ENCODE measurements at regions of chr14 and their contacts with region 1.

Region 1: DNA sequence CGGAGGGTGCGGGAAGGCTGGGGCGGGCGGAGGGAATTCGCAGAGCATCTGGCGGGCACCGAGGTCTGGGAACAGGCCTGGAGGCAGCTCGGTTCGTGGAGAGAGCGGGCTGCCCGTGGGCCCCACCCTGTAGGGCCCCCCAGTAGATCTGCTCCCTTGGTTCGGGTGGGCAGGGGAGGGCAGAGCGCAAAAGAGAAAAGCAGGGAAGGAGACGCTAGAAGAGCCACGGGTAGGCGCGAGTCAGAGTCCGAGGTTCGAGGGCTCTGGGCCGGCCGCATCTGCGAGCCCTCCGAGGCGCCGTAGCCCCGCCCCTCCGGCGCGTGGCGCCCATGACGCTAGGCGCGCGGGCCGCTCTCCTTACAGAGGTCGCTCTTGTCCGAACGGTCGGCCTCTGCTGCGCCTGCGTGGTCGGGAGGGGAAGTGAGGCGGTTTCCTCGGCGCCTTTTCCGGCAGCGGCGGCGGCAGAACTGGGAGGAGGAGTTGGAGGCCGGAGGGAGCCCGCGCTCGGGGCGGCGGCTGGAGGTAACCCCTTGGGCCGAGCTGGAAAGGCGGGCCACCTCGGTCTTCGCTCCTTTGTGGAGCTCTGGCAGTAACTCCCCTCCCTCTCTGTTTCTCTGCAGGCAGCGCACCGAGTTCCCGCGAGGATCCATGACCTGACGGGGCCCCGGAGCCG is at the start of gene ARF6:
- DNase-seq: peak; percentile 85 to 98 (median 89)
- ATAC-seq: peak; percentile 93
- H3K4me3 ChIP-seq: peak within 1 kb of the TSS; percentile 68
- H3K4me3 Mint-ChIP-seq: peak within 1 kb of the TSS; percentile 95 to 100 (median 98)
- H3K27ac ChIP-seq: peak within 1 kb of the TSS; percentile 97
- H3K27ac Mint-ChIP-seq: peak within 1 kb of the TSS; percentile 98 to 100 (median 99)
- H3K4me1 ChIP-seq: peaks cover 10 to 18% of the 10 kb centered on the region in 2 donors
- H3K4me1 Mint-ChIP-seq: peaks cover 21 to 42% (median 40%) of the 10 kb centered on the region in 7 donors
- H3K27me3 ChIP-seq: no peaks in the 10 kb centered on the region
- H3K27me3 Mint-ChIP-seq: no peaks in the 10 kb centered on the region
- total RNA-seq, gene ARF6: 61.9 to 173 (median 77.6) TPM

Region 2: GRCh38 chr14:49879683-49880204 is 13.0 kb before region 1 on chr14:
- CTCF ChIA-PET with region 1: interaction called, 12 read pairs
- POLR2A ChIA-PET with region 1: interaction called, 9 read pairs
- intact Hi-C with region 1: loop called (anchors 1 kb)
- DNase-seq: peak in 8 of 9 donors; percentile 32 to 64 (median 48)
- ATAC-seq: peak; percentile 92
- H3K4me3 ChIP-seq: no peak overlapping the region
- H3K4me3 Mint-ChIP-seq: no peak overlapping the region
- H3K27ac ChIP-seq: no peak overlapping the region
- H3K27ac Mint-ChIP-seq: peak overlapping the region in 6 of 9 donors; percentile 17 to 74 (median 44)
- H3K4me1 ChIP-seq: peaks cover 0 to 6% of the 10 kb centered on the region in 2 donors
- H3K4me1 Mint-ChIP-seq: peaks cover 10 to 30% (median 12%) of the 10 kb centered on the region in 7 donors
- H3K27me3 ChIP-seq: no peaks in the 10 kb centered on the region
- H3K27me3 Mint-ChIP-seq: peaks cover 0 to 3% (median 0%) of the 10 kb centered on the region in 5 donors

Region 3: GRCh38 chr14:49946320-49947141 is 53.8 kb after region 1 on chr14:
- CTCF ChIA-PET with region 1: no interaction called
- POLR2A ChIA-PET with region 1: interaction called, 18 read pairs
- intact Hi-C with region 1: loop called (anchors 2 kb)
- DNase-seq: peak in 7 of 9 donors; percentile 30 to 55 (median 43)
- ATAC-seq: peak; percentile 71
- H3K4me3 ChIP-seq: peak overlapping the region; percentile 36
- H3K4me3 Mint-ChIP-seq: peak overlapping the region; percentile 43 to 81 (median 74)
- H3K27ac ChIP-seq: peak overlapping the region; percentile 66
- H3K27ac Mint-ChIP-seq: peak overlapping the region; percentile 82 to 98 (median 94)
- H3K4me1 ChIP-seq: peaks cover 28 to 46% of the 10 kb centered on the region in 2 donors
- H3K4me1 Mint-ChIP-seq: peaks cover 26 to 86% (median 77%) of the 10 kb centered on the region in 7 donors
- H3K27me3 ChIP-seq: no peaks in the 10 kb centered on the region
- H3K27me3 Mint-ChIP-seq: no peaks in the 10 kb centered on the region

Region 4: DNA sequence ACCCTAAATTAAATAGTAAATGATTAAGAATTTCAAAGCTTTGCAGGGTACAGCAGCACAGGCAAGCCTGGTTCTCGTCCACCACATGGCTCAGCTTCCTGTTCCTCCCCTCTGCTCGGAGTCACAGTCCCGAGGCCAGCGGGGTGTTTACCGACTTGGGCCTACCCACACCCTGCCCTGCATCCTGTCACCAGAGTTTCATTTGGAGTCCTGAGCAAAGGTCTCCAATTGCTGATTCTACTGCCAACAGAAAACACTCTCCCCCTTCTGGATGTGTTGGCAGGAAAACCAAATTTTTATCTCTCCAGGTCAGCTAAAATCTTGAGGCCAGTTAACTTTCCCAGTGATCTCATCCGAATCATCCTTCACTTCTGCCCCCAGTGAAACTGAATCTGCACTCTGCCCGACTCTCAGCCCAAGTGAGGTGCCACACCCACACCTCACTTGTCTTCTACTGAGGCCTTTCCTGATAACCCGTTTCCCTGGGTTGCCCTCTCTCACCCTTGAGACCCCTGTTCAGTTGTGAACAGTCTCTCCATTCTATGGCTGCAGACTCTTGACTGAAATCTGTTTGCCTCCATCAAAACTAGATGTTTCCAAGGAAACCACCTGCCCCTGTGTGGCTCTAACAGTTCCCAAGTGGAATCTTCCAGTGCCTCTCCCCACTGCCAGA is 152.4 kb after region 1 on chr14:
- CTCF ChIA-PET with region 1: interaction called, 3 read pairs
- POLR2A ChIA-PET with region 1: interaction called, 15 read pairs
- intact Hi-C with region 1: loop called (anchors 1 kb)
- DNase-seq: peak in 8 of 9 donors; percentile 39 to 74 (median 62)
- ATAC-seq: peak; percentile 86
- H3K4me3 ChIP-seq: no peak overlapping the region
- H3K4me3 Mint-ChIP-seq: peak overlapping the region; percentile 50 to 89 (median 74)
- H3K27ac ChIP-seq: peak overlapping the region; percentile 69
- H3K27ac Mint-ChIP-seq: peak overlapping the region; percentile 88 to 99 (median 96)
- H3K4me1 ChIP-seq: peaks cover 51 to 63% of the 10 kb centered on the region in 2 donors
- H3K4me1 Mint-ChIP-seq: peaks cover 49 to 83% (median 71%) of the 10 kb centered on the region in 7 donors
- H3K27me3 ChIP-seq: no peaks in the 10 kb centered on the region
- H3K27me3 Mint-ChIP-seq: no peaks in the 10 kb centered on the region

Region 5: GRCh38 chr14:50099335-50099734 is 206.6 kb after region 1 on chr14:
- CTCF ChIA-PET with region 1: interaction called, 7 read pairs
- POLR2A ChIA-PET with region 1: interaction called, 11 read pairs
- intact Hi-C with region 1: no loop called
- DNase-seq: no peak
- ATAC-seq: no peak
- H3K4me3 ChIP-seq: no peak overlapping the region
- H3K4me3 Mint-ChIP-seq: peak overlapping the region in 9 of 10 donors; percentile 9 to 61 (median 38)
- H3K27ac ChIP-seq: no peak overlapping the region
- H3K27ac Mint-ChIP-seq: peak overlapping the region; percentile 13 to 87 (median 79)
- H3K4me1 ChIP-seq: peaks cover 23 to 67% of the 10 kb centered on the region in 2 donors
- H3K4me1 Mint-ChIP-seq: peaks cover 39 to 92% (median 76%) of the 10 kb centered on the region in 7 donors
- H3K27me3 ChIP-seq: no peaks in the 10 kb centered on the region
- H3K27me3 Mint-ChIP-seq: peaks cover 0 to 5% (median 0%) of the 10 kb centered on the region in 5 donors